ENCODE measurements at regions of chr5 and their contacts with region 1.

Region 1: DNA sequence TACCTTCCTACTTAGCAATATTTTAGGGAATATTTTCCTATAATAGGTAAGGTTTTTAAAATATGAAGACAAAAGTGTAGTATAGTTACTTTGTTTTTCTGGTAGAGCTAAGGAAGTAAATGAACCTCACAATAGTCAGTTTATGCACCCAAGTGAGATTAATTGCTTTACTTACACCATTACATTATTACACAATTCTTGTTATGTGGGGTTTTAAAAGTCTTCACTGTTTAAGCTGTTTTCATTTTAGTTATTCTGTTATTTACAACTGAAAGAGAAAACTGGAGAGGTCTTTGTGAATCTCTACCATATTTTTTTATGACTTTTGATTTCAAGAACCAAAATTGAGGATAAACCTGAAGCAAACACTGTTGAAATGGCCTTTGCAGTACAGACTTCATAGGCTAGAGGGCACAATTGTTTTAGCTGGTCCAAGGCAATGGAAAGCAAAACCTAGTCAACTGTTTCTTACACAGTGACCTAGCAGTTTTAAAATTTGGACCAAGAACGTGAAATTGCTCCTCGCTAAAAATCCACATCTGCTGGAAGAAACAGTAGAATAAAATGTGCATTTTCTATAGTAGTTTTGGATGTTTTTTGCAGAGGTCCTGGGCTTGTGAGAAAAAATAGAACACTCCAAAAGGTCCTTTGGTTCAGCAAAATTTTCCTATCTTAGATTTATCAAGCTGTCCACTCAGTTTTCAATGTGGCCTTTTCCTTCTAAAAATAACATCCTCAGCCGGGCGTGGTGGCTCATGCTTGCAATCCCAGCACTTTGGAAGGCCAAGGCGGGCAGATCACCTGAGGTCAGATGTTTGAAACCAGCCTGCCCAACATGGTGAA is 66.4 kb upstream of the FER start:
- DNase-seq: peak; percentile 46 to 66
- H3K4me3 ChIP-seq: no peak overlapping the region
- H3K4me3 Mint-ChIP-seq: no peak overlapping the region
- H3K27ac Mint-ChIP-seq: no peak overlapping the region
- H3K4me1 ChIP-seq: peaks cover 7% of the 10 kb centered on the region
- H3K4me1 Mint-ChIP-seq: peaks cover 9% of the 10 kb centered on the region
- H3K27me3 ChIP-seq: no peaks in the 10 kb centered on the region
- H3K27me3 Mint-ChIP-seq: peaks cover 3% of the 10 kb centered on the region
- CTCF ChIP-seq: peak; percentile 73 to 91

Region 2: DNA sequence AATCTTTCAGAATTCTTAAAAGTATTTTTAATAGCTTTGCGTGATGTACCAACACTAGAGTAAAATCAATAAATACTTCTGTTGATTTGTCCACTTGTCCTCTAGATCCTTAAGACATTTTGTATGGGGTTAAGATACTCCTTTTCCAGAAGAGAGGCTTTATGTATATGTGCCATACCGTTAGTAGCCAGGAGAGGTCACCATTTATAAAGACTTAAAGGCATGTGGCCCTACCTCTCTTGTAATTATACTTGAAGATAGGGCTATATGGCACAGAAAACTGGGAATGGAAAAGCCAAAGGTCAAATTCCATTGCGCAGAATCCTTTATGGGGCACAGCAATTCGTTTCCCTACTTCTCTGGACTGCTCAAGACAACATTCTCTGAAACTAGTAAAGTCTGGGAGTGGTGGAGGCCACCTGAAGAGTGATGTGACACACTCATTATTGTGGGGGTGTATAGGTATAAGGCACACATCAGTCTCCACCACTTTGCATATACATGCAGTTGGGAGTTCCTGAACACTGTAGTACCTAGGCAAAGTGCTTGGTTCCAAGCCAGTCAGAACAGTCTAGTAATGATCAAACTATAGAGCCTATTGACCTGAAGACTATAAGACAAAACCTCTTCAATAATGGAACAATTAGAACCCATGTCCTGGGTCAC is 159.3 kb before region 1 on chr5:
- CTCF ChIA-PET with region 1: no interaction called
- POLR2A ChIA-PET with region 1: no interaction called
- intact Hi-C with region 1: loop called (anchors 2 kb)
- DNase-seq: peak in 1 of 2 experiments; percentile 66
- H3K4me3 ChIP-seq: no peak overlapping the region
- H3K4me3 Mint-ChIP-seq: no peak overlapping the region
- H3K27ac Mint-ChIP-seq: no peak overlapping the region
- H3K4me1 ChIP-seq: peaks cover 8% of the 10 kb centered on the region
- H3K4me1 Mint-ChIP-seq: peaks cover 12% of the 10 kb centered on the region
- H3K27me3 ChIP-seq: no peaks in the 10 kb centered on the region
- H3K27me3 Mint-ChIP-seq: no peaks in the 10 kb centered on the region
- CTCF ChIP-seq: peak; percentile 71

Region 3: GRCh38 chr5:108727651-108728565 is 46.6 kb after region 1 on chr5:
- CTCF ChIA-PET with region 1: interaction called, 3 read pairs
- POLR2A ChIA-PET with region 1: interaction called, 7 read pairs
- intact Hi-C with region 1: loop called (anchors 1 kb)
- DNase-seq: peak; percentile 93 to 96
- H3K4me3 ChIP-seq: peak overlapping the region; percentile 89
- H3K4me3 Mint-ChIP-seq: peak overlapping the region; percentile 78
- H3K27ac Mint-ChIP-seq: peak overlapping the region; percentile 95
- H3K4me1 ChIP-seq: peaks cover 11% of the 10 kb centered on the region
- H3K4me1 Mint-ChIP-seq: peaks cover 31% of the 10 kb centered on the region
- H3K27me3 ChIP-seq: no peaks in the 10 kb centered on the region
- H3K27me3 Mint-ChIP-seq: no peaks in the 10 kb centered on the region
- CTCF ChIP-seq: no peak

Region 4: GRCh38 chr5:108748401-108749127 is 67.3 kb after region 1 on chr5:
- CTCF ChIA-PET with region 1: no interaction called
- POLR2A ChIA-PET with region 1: interaction called, 4 read pairs
- intact Hi-C with region 1: loop called (anchors 1 kb)
- DNase-seq: peak; percentile 99 to 100
- H3K4me3 ChIP-seq: peak overlapping the region; percentile 98
- H3K4me3 Mint-ChIP-seq: peak overlapping the region; percentile 90
- H3K27ac Mint-ChIP-seq: peak overlapping the region; percentile 93
- H3K4me1 ChIP-seq: peaks cover 24% of the 10 kb centered on the region
- H3K4me1 Mint-ChIP-seq: peaks cover 23% of the 10 kb centered on the region
- H3K27me3 ChIP-seq: no peaks in the 10 kb centered on the region
- H3K27me3 Mint-ChIP-seq: no peaks in the 10 kb centered on the region
- CTCF ChIP-seq: no peak

Region 5: GRCh38 chr5:108858959-108859358 is 177.7 kb after region 1 on chr5:
- CTCF ChIA-PET with region 1: no interaction called
- POLR2A ChIA-PET with region 1: no interaction called
- intact Hi-C with region 1: loop called (anchors 10 kb)
- DNase-seq: no peak
- H3K4me3 ChIP-seq: no peak overlapping the region
- H3K4me3 Mint-ChIP-seq: no peak overlapping the region
- H3K27ac Mint-ChIP-seq: no peak overlapping the region
- H3K4me1 ChIP-seq: no peaks in the 10 kb centered on the region
- H3K4me1 Mint-ChIP-seq: no peaks in the 10 kb centered on the region
- H3K27me3 ChIP-seq: no peaks in the 10 kb centered on the region
- H3K27me3 Mint-ChIP-seq: no peaks in the 10 kb centered on the region
- CTCF ChIP-seq: no peak

Region 6: DNA sequence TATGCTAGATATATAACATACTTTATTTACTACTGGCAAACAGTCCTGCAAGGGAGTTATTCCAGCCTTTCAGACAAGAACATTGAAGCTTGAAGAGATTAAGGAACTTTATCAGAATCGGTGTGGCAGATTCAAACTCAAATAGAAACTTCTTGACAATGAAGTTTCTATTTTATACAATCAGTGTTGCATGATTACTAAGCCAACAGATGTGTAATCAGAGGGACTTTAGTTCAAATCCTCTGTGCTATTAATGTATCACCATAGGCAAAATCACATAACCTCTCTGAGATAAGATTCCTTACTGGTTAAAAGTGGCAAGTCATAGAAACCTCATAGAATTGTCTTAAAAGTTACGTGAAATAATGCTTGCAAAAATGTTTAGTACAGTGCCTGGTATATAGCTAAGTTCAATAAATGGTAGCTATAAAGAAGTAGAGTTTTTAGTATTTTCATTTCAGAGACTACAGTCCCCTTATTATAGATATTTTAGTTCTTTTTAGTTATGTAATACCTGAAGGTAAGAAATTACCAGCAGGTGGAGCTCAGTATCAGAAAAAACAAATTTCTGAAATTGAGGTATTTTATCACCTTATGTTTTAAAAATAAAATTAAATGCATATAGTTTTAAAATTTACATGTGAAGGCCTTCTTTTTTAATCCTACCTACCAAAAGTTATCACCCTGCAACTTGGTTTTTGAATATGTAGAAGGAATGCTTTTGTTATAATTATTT is 238.5 kb after region 1 on chr5:
- CTCF ChIA-PET with region 1: no interaction called
- POLR2A ChIA-PET with region 1: no interaction called
- intact Hi-C with region 1: loop called (anchors 2 kb)
- DNase-seq: no peak
- H3K4me3 ChIP-seq: no peak overlapping the region
- H3K4me3 Mint-ChIP-seq: no peak overlapping the region
- H3K27ac Mint-ChIP-seq: no peak overlapping the region
- H3K4me1 ChIP-seq: peaks cover 8% of the 10 kb centered on the region; the same call in 1 of the 2 replicates
- H3K4me1 Mint-ChIP-seq: peaks cover 16% of the 10 kb centered on the region
- H3K27me3 ChIP-seq: no peaks in the 10 kb centered on the region
- H3K27me3 Mint-ChIP-seq: no peaks in the 10 kb centered on the region
- CTCF ChIP-seq: peak; percentile 18 to 42

Measured in Caco-2 (cell line).